CD8-positive, alpha-beta T cell (primary cell): ENCODE measurements at regions of chr5 and their contacts with region 1.

Region 1: DNA sequence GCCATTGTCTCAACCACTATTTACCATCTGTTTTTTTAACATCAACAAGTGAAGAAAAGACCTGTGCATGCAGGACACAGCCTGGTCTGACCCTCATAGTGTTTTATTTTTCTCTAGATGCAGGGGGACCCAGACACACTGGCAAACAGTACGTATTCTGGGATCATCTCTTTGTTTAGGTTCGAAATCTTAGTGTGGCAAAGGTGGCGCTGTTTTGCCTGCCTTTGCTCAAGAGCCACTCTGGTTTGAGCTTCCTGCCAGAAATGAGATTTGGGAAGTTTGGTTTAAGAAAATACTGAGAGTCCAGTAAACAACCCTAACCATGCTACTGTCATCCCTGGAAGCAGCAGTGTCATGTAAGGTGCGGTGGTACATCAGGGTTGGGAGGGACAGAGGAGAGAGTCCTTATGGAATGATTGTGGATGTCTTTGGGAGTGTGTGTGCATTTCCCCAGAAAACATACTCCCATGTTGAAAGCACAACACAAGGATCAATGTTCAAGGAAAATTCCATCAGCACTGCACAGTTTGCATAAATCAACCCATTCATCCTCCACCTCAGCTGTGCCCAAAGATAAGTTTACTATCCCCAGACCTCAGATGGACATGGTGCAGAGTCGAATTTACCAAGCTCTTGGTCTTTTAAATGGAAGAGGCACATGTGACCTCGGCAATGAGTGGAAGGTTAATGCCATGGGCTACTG is 34.0 kb upstream of the FLT4 start:
- DNase-seq: peak in 1 of 9 experiments; percentile 29
- ATAC-seq: no peak
- H3K4me3 ChIP-seq: no peak overlapping the region
- H3K4me3 Mint-ChIP-seq: no peak overlapping the region
- H3K27ac ChIP-seq: peak overlapping the region in 1 of 2 experiments; percentile 22
- H3K27ac Mint-ChIP-seq: peak overlapping the region; percentile 77
- H3K4me1 ChIP-seq: peaks cover 55% of the 10 kb centered on the region
- H3K4me1 Mint-ChIP-seq: peaks cover 50% of the 10 kb centered on the region
- H3K27me3 ChIP-seq: no peaks in the 10 kb centered on the region
- H3K27me3 Mint-ChIP-seq: no peaks in the 10 kb centered on the region
- CTCF ChIP-seq: no peak

Region 2: DNA sequence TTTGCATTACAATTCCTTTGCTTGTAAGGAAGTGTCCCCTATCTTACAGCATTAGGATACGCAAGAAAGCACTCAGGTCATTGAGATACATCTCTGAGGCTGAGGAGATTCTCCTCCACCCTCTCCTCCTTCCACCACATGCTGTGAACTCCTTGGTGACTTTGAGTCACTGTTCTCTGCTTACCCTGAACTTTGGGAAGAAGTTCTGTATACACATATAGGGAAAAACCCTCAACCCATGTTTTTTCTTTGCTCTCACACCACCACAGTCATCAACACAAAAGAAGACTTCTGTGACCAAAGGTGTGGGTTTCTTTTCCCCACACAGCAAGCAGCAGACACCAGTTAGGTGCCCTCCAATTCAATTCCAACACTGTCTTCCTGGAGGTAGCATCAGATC is 151.1 kb before region 1 on chr5:
- CTCF ChIA-PET with region 1: no interaction called
- POLR2A ChIA-PET with region 1: no interaction called
- intact Hi-C with region 1: no loop called
- DNase-seq: no peak
- ATAC-seq: no peak
- H3K4me3 ChIP-seq: no peak overlapping the region
- H3K4me3 Mint-ChIP-seq: no peak overlapping the region
- H3K27ac ChIP-seq: no peak overlapping the region
- H3K27ac Mint-ChIP-seq: no peak overlapping the region
- H3K4me1 ChIP-seq: no peaks in the 10 kb centered on the region
- H3K4me1 Mint-ChIP-seq: peaks cover 9% of the 10 kb centered on the region
- H3K27me3 ChIP-seq: no peaks in the 10 kb centered on the region
- H3K27me3 Mint-ChIP-seq: no peaks in the 10 kb centered on the region
- CTCF ChIP-seq: no peak

Region 3: DNA sequence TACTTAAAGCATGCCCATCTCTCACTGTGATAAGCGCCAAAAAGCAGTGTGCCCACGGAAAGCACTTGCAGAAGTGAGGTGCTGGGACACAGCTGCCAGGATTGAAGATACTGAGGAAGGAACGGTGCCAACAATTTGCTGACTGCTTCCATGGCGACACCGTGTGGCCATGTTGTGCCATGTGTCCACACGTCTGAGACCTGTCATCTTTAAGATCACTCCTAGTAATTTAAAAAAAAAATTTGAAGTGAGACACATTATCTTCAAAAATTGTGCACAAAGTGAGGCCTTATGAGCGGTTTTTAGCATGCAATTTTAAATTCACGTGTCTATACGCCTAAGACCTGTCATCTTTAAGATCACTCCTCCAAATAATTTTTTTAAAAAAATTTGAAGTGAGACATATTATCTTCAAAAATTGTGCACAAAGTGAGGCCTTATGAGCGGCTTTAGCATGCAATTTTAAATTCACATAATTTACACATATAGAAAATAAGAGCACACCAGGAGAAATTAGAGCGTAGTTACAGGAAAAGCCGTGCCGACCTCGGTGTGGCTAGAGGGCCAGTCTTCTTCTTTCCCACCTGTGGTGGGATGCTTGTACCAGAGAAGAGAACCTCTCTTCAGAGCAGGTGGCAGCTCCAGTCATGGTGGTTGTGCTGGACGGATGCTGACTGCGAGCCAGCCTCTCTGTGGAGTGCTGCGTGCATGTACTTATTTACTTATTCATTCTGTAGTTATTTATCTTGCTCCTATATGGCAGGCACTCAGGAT is 12.6 kb before region 1 on chr5:
- CTCF ChIA-PET with region 1: interaction called, 18 read pairs
- POLR2A ChIA-PET with region 1: interaction called, 8 read pairs
- intact Hi-C with region 1: no loop called
- DNase-seq: peak in 8 of 9 experiments; percentile 28 to 76 (median 51)
- ATAC-seq: peak; percentile 70
- H3K4me3 ChIP-seq: no peak overlapping the region
- H3K4me3 Mint-ChIP-seq: peak overlapping the region; percentile 40
- H3K27ac ChIP-seq: no peak overlapping the region
- H3K27ac Mint-ChIP-seq: no peak overlapping the region
- H3K4me1 ChIP-seq: peaks cover 6% of the 10 kb centered on the region
- H3K4me1 Mint-ChIP-seq: peaks cover 18% of the 10 kb centered on the region
- H3K27me3 ChIP-seq: peaks cover 2 to 3% of the 10 kb centered on the region in 2 experiments
- H3K27me3 Mint-ChIP-seq: peaks cover 7% of the 10 kb centered on the region
- CTCF ChIP-seq: peak; percentile 55

Region 4: GRCh38 chr5:181081989-181082388 is 398.6 kb after region 1 on chr5:
- CTCF ChIA-PET with region 1: no interaction called
- POLR2A ChIA-PET with region 1: no interaction called
- intact Hi-C with region 1: no loop called
- DNase-seq: no peak
- ATAC-seq: no peak
- H3K4me3 ChIP-seq: no peak overlapping the region
- H3K4me3 Mint-ChIP-seq: no peak overlapping the region
- H3K27ac ChIP-seq: no peak overlapping the region
- H3K27ac Mint-ChIP-seq: no peak overlapping the region
- H3K4me1 ChIP-seq: no peaks in the 10 kb centered on the region
- H3K4me1 Mint-ChIP-seq: no peaks in the 10 kb centered on the region
- H3K27me3 ChIP-seq: no peaks in the 10 kb centered on the region
- H3K27me3 Mint-ChIP-seq: peaks cover 43% of the 10 kb centered on the region
- CTCF ChIP-seq: no peak